ENCODE measurements at regions of chrX and their contacts with region 1.

Region 1: DNA sequence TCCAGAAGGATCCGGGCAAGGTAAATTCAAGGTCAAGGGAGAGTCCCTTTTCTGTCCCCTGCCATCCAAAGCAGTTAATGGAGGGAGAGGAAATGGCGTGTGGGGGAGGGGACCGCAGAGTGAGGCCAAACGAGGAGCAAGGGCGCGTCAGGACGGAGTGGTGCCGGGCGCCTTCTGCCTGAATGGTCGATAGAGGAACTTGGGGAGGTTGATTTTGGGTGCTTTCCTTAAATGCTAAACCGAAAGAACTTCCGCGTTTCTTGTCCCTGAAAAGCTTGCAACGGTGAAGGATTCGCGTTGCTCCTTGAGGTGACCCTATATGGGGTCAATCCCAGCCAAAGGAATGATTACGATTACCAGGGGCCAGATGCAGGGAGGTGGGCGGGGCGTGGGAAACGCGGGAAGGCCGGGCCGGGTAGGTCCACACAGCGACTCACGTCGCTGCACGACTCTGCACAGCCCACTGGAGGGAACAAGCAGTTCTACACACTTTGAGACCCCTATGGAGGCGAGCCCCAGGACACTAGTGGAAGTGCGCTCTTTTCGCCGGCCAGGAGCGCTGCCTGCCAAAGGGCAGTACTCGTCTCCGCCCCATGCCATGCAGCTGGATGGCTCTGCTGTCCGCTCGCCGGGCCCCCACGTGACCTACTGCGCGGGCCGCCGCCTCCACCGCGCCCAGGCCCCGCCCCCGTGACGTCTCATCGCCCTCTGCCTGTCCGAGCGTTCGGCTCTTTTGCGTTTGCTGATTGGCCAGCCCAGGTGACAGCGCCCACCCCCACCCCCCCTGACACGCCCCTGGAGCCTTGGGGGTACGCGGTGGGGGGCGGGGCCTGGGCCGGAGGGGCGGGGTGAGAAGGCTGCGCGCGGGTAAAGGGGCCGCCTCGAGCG is 452 bp upstream of the GK start:
- DNase-seq: peak; percentile 64
- ATAC-seq: peak; percentile 87
- H3K4me3 ChIP-seq: peak overlapping the region; percentile 51; the same call in 1 of the 2 replicates
- H3K27ac ChIP-seq: peak overlapping the region; percentile 83
- H3K4me1 ChIP-seq: no peaks in the 10 kb centered on the region; the same call in 1 of the 2 replicates
- H3K27me3 ChIP-seq: no peaks in the 10 kb centered on the region
- CTCF ChIP-seq: no peak
- EP300 ChIP-seq: no peak
- POLR2A ChIP-seq: peak; percentile 84
- RAD21 ChIP-seq: no peak

Region 2: GRCh38 chrX:30577362-30577991 is 75.3 kb before region 1 on chrX and contains the start of gene TASL:
- CTCF ChIA-PET with region 1: interaction called, 3 read pairs
- POLR2A ChIA-PET with region 1: interaction called, 5 read pairs
- RAD21 ChIA-PET with region 1: no interaction called
- SMC1A ChIA-PET with region 1: interaction called, 4 read pairs
- in situ Hi-C with region 1: no loop called
- intact Hi-C with region 1: loop called (anchors 2 kb)
- DNase-seq: peak; percentile 94
- ATAC-seq: peak; percentile 83
- H3K4me3 ChIP-seq: peak within 1 kb of the TSS; percentile 98
- H3K27ac ChIP-seq: peak within 1 kb of the TSS; percentile 99
- H3K4me1 ChIP-seq: peaks cover 16% of the 10 kb centered on the region
- H3K27me3 ChIP-seq: no peaks in the 10 kb centered on the region
- CTCF ChIP-seq: no peak
- EP300 ChIP-seq: peak; percentile 94 to 96
- POLR2A ChIP-seq: peak; percentile 60
- RAD21 ChIP-seq: no peak
- polyA plus RNA-seq, gene TASL: 18.2 to 19.4 TPM

Measured in GM12878 (cell line).